ENCODE measurements at regions of chr6 and their contacts with region 1.

Region 1: GRCh38 chr6:40597841-40598240 is 10.7 kb upstream of the LRFN2 start:
- DNase-seq: no peak
- H3K4me3 ChIP-seq: no peak overlapping the region
- H3K27me3 ChIP-seq: no peaks in the 10 kb centered on the region
- CTCF ChIP-seq: no peak

Region 2: DNA sequence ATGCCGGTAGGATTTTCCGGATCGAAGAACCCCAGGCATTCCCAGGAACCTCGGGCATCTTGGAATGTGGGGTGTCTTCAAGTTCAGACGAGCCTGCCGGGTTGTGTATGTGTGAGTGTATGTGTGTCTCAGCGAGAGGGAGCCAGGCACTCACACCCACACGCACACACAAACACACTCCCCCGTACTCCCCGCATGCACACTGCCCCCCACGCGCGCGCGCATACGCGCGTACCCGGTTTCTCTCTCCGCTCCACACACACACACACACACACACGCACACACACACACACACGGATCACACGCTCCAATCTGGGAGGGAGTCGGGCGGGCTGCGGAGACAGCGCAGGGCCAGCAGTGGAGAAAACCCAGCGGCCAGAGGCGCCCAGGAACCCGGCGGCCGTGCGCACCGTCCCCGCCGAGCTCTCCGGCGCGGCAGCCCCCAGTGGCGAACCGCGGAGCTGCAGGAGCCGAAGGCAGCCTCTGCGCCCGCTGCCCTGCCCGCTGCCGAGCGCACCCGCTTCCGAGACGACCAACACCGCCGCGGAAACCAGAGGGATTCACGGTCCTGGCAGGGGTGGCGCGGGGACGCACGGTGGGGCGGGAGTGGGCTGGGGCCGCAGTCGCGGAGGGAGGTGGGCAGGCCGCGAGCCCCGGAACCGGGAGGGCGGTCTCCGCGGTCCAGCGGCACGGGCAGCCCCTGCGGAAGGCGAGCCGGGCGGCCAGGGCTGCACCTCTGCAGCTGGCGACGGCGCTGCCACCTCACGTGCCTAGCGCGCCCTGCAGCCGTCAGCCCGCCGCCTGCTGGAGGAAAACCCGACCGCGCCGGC is 10.4 kb before region 1 on chr6 and contains the start of gene LRFN2:
- CTCF ChIA-PET with region 1: interaction called, 11 read pairs
- POLR2A ChIA-PET with region 1: no interaction called
- DNase-seq: no peak
- H3K4me3 ChIP-seq: peak within 1 kb of the TSS; percentile 32
- H3K27me3 ChIP-seq: peaks cover 25% of the 10 kb centered on the region
- CTCF ChIP-seq: peak; percentile 45
- polyA plus RNA-seq, gene LRFN2: not detected in 2 replicates

Region 3: DNA sequence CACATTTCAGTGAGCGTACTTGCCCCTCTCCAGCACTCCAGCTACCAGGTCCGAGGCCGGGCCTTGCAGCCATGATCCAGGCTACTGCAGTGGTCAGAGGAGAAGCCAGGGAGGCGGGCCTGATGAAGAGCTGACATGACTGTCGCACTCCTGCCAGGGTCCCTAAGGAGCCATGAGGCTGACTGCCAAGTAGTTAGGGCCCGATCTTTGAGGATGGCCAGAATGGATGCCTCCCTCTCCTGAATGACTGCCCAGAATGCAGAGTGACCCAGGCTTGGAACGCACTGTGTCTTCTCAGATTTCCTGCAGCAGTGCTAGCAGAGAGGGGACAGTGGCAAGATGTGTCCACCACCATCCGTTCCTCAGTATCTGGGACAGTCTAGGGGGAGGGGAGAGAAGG is 14.1 kb after region 1 on chr6:
- CTCF ChIA-PET with region 1: no interaction called
- POLR2A ChIA-PET with region 1: no interaction called
- DNase-seq: no peak
- H3K4me3 ChIP-seq: no peak overlapping the region
- H3K27me3 ChIP-seq: peaks cover 1% of the 10 kb centered on the region; the same call in 1 of the 2 replicates
- CTCF ChIP-seq: no peak